Lower lobe of right lung (tissue), 2 donors: ENCODE measurements at regions of chr13 and their contacts with region 1.

Region 1: DNA sequence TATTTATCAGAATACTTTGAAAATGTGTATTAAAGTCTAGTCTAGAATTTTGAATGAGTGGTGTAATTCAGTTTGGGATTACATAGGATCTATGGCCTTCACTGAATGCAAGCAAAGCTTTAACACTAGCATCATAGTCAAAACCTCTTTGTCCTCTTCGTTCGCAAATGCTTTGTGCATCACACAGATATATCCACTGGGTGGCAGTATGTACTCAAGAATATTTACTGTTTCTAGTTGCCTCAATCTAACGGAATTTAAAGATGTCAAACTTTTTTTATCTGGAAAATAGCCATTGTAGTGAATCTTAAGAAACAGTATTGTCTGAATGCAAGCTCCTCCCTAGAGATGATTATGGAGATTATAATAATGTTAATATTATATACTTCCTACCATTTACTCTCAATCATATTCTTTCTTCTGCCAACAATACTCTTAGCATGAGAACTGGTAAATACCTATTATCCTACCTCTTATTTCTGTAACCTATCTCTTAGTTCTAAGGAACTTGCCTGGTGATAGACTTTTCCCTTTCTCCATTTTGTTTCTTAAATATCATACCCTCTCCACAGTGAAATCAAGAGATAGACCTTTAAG is 25.8 kb downstream of the LACC1 start:
- DNase-seq: no peak
- ATAC-seq: peak; percentile 75 to 78
- H3K4me3 ChIP-seq: no peak overlapping the region
- H3K27ac ChIP-seq: no peak overlapping the region
- H3K4me1 ChIP-seq: peaks cover 4% of the 10 kb centered on the region
- H3K27me3 ChIP-seq: no peaks in the 10 kb centered on the region
- CTCF ChIP-seq: peak; percentile 83

Region 2: GRCh38 chr13:43448605-43449336 is 456.8 kb before region 1 on chr13:
- intact Hi-C with region 1: no loop called
- DNase-seq: no peak
- ATAC-seq: no peak
- H3K4me3 ChIP-seq: no peak overlapping the region
- H3K27ac ChIP-seq: no peak overlapping the region
- H3K4me1 ChIP-seq: no peaks in the 10 kb centered on the region
- H3K27me3 ChIP-seq: no peaks in the 10 kb centered on the region
- CTCF ChIP-seq: no peak

Region 3: GRCh38 chr13:43767341-43767931 is 138.1 kb before region 1 on chr13:
- intact Hi-C with region 1: no loop called
- DNase-seq: no peak
- ATAC-seq: peak; percentile 51 to 61
- H3K4me3 ChIP-seq: no peak overlapping the region
- H3K27ac ChIP-seq: no peak overlapping the region
- H3K4me1 ChIP-seq: peaks cover 6% of the 10 kb centered on the region
- H3K27me3 ChIP-seq: no peaks in the 10 kb centered on the region
- CTCF ChIP-seq: no peak

Region 4: GRCh38 chr13:44465318-44465717 is 559.8 kb after region 1 on chr13:
- intact Hi-C with region 1: loop called (anchors 10 kb)
- DNase-seq: no peak
- ATAC-seq: no peak
- H3K4me3 ChIP-seq: no peak overlapping the region
- H3K27ac ChIP-seq: no peak overlapping the region
- H3K4me1 ChIP-seq: no peaks in the 10 kb centered on the region
- H3K27me3 ChIP-seq: no peaks in the 10 kb centered on the region
- CTCF ChIP-seq: no peak